ENCODE measurements at regions of chr11 and their contacts with region 1.

Region 1: GRCh38 chr11:36564376-36565030 is 3.3 kb upstream of the RAG1 start:
- DNase-seq: no peak
- H3K4me3 ChIP-seq: peak overlapping the region in 1 of 2 donors; percentile 32
- H3K27ac ChIP-seq: no peak overlapping the region
- H3K4me1 ChIP-seq: no peaks in the 10 kb centered on the region
- H3K27me3 ChIP-seq: no peaks in the 10 kb centered on the region
- CTCF ChIP-seq: peak in 2 of 3 experiments; percentile 36 to 54
- POLR2A ChIP-seq: no peak

Region 2: DNA sequence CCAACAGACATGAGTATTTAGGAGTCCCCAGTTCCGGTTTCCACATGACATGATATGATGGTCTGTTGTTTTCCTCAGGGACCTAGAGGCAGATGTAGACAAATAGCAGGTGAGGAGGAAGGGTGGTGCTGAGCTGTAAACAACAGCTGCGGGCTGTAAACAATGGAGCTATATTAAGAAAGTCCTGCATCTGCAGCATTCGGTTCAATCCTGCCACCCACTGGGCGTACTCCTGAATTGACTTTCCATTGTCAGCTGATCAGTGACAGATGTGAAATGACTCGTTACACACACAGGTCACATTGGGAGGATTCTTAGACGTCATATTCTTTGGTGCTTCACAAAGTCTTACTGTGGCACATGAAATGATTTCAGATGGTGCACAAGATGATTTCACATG is 23.5 kb before region 1 on chr11:
- intact Hi-C with region 1: no loop called
- DNase-seq: no peak
- H3K4me3 ChIP-seq: no peak overlapping the region
- H3K27ac ChIP-seq: no peak overlapping the region
- H3K4me1 ChIP-seq: no peaks in the 10 kb centered on the region
- H3K27me3 ChIP-seq: no peaks in the 10 kb centered on the region
- CTCF ChIP-seq: no peak
- POLR2A ChIP-seq: no peak

Region 3: DNA sequence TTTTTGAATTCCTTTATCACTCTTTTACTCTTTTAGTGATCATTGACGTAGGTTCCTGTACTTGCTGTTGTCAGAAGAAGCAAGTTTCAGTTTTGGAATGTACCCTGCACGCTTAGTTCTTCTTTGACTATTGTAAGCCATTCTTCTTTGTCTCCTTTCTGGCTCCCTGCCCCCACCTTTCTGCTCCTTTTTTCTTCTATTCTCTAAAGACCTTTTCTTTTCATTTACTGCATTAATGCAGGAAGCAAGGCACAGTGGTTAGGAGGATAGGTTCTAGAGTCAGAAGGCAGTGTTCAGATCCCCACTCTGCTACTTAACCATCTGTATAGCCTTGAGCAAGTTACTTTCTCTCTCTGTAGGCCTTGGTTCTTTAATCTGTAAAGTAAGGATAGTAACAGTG is 67.3 kb after region 1 on chr11:
- intact Hi-C with region 1: no loop called
- DNase-seq: no peak
- H3K4me3 ChIP-seq: no peak overlapping the region
- H3K27ac ChIP-seq: no peak overlapping the region
- H3K4me1 ChIP-seq: no peaks in the 10 kb centered on the region
- H3K27me3 ChIP-seq: no peaks in the 10 kb centered on the region
- CTCF ChIP-seq: no peak
- POLR2A ChIP-seq: no peak

Region 4: DNA sequence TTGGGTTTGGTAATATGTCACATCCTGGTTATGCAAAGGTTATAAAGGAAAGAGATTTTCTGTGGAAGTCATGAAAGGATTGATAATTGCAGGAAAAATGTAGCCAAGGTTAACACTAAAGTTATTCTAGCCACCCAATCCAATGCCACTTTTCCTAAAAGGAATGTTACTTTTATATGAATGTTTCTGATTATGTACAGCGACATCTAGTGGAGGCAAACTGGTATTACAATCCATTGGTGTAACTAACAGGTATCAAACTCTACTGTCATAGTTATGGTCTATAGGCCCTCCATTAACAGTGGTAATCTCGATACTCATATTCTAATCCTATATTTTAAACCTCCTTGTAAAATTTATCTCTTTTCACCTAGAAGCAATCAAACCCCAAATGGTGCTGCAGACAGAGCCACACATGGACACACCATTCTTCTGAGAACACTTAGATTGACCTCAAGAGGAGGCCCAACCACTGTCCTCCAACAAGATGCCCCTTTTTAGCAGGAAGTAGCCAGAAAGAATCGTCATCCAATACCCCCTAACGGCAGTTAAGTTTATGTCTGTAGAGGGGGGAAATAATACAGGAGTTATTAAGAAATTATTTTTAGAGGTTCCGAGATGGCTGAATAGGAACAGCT is 108.4 kb after region 1 on chr11:
- intact Hi-C with region 1: loop called (anchors 10 kb)
- DNase-seq: no peak
- H3K4me3 ChIP-seq: no peak overlapping the region
- H3K27ac ChIP-seq: no peak overlapping the region
- H3K4me1 ChIP-seq: no peaks in the 10 kb centered on the region
- H3K27me3 ChIP-seq: no peaks in the 10 kb centered on the region
- CTCF ChIP-seq: peak; percentile 38 to 62 (median 52)
- POLR2A ChIP-seq: no peak